ENCODE measurements at regions of chr15 and their contacts with region 1.

Region 1: GRCh38 chr15:43329960-43330779 is at the start of gene LCMT2:
- DNase-seq: peak; percentile 98
- H3K4me3 ChIP-seq: peak within 1 kb of the TSS; percentile 68 to 96 (median 80)
- H3K27ac ChIP-seq: peak within 1 kb of the TSS; percentile 92 to 97 (median 94)
- H3K4me1 ChIP-seq: peaks cover 22 to 34% (median 27%) of the 10 kb centered on the region in 4 donors
- H3K27me3 ChIP-seq: no peaks in the 10 kb centered on the region
- CTCF ChIP-seq: no peak
- EP300 ChIP-seq: no peak
- POLR2A ChIP-seq: no peak
- total RNA-seq, gene LCMT2: 5.4 to 9.3 (median 7.1) TPM

Region 2: GRCh38 chr15:43253431-43254403 is 76.5 kb before region 1 on chr15:
- intact Hi-C with region 1: no loop called
- DNase-seq: no peak
- H3K4me3 ChIP-seq: no peak overlapping the region
- H3K27ac ChIP-seq: no peak overlapping the region
- H3K4me1 ChIP-seq: no peaks in the 10 kb centered on the region
- H3K27me3 ChIP-seq: peaks cover 0 to 6% (median 0%) of the 10 kb centered on the region in 4 donors
- CTCF ChIP-seq: no peak
- EP300 ChIP-seq: no peak
- POLR2A ChIP-seq: no peak

Region 3: GRCh38 chr15:43370975-43371974 is 41.1 kb after region 1 on chr15 and contains the starts of genes TUBGCP4 and ZSCAN29:
- intact Hi-C with region 1: loop called (anchors 5 kb)
- DNase-seq: peak; percentile 94
- H3K4me3 ChIP-seq: peak within 1 kb of the TSS; percentile 66 to 97 (median 80)
- H3K27ac ChIP-seq: peak within 1 kb of the TSS; percentile 75 to 84 (median 79)
- H3K4me1 ChIP-seq: peaks cover 26 to 34% (median 33%) of the 10 kb centered on the region in 4 donors
- H3K27me3 ChIP-seq: no peaks in the 10 kb centered on the region
- CTCF ChIP-seq: peak in 2 of 3 experiments; percentile 9 to 38
- EP300 ChIP-seq: no peak
- POLR2A ChIP-seq: no peak
- total RNA-seq, gene TUBGCP4: 9.3 to 17.0 (median 14.1) TPM
- total RNA-seq, gene ZSCAN29: 17.4 to 34.6 (median 21.5) TPM